ENCODE measurements at regions of chr2 and their contacts with region 1.

Region 1: GRCh38 chr2:231104115-231104713 is 20.6 kb downstream of the HTR2B start:
- DNase-seq: no peak
- ATAC-seq: peak; percentile 82
- H3K4me3 ChIP-seq: no peak overlapping the region
- H3K27ac ChIP-seq: no peak overlapping the region
- H3K4me1 ChIP-seq: peaks cover 6% of the 10 kb centered on the region
- H3K27me3 ChIP-seq: no peaks in the 10 kb centered on the region
- CTCF ChIP-seq: peak; percentile 86

Region 2: GRCh38 chr2:231198291-231199173 is 94.3 kb after region 1 on chr2 and contains the start of gene ARMC9:
- intact Hi-C with region 1: loop called (anchors 10 kb)
- DNase-seq: peak; percentile 91
- ATAC-seq: peak; percentile 98
- H3K4me3 ChIP-seq: peak within 1 kb of the TSS; percentile 87
- H3K27ac ChIP-seq: peak within 1 kb of the TSS; percentile 53
- H3K4me1 ChIP-seq: peaks cover 10% of the 10 kb centered on the region
- H3K27me3 ChIP-seq: no peaks in the 10 kb centered on the region
- CTCF ChIP-seq: no peak
- total RNA-seq, gene ARMC9: 37.1 TPM